Activated CD4-positive, alpha-beta memory T cell treated with anti-CD3 and anti-CD28 coated beads, Interleukin-2, amount 10 ng/mL, durations not matched to agents 7 days and 5 days (primary cell): ENCODE measurements at regions of chr10 and their contacts with region 1.

Region 1: GRCh38 chr10:119750391-119751230 is 24.8 kb downstream of the INPP5F start:
- DNase-seq: peak; percentile 69
- H3K4me3 Mint-ChIP-seq: no peak overlapping the region
- H3K27ac Mint-ChIP-seq: no peak overlapping the region
- H3K4me1 Mint-ChIP-seq: peaks cover 5% of the 10 kb centered on the region
- H3K27me3 Mint-ChIP-seq: no peaks in the 10 kb centered on the region

Region 2: DNA sequence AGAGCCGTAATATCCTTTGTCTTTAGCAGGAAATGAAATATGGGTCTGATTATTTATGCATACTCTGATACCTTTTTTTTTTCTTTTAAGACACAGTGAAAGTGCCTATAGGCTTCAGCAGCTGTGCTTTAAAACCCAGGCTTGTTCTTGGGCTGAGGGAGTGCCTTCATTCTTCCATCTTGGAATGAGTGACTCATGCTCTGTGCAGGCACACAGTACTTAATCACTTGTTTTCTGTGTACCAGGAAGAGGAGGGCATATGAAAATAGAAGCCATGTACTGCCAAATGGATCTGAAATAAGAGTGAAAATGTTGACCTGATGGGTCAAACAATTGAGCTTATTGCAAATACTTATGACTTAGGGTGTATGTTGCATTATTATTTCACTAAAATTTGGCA is 12.8 kb before region 1 on chr10:
- CTCF ChIA-PET with region 1: interaction called, 13 read pairs
- POLR2A ChIA-PET with region 1: no interaction called
- DNase-seq: no peak
- H3K4me3 Mint-ChIP-seq: no peak overlapping the region
- H3K27ac Mint-ChIP-seq: no peak overlapping the region
- H3K4me1 Mint-ChIP-seq: peaks cover 15% of the 10 kb centered on the region
- H3K27me3 Mint-ChIP-seq: no peaks in the 10 kb centered on the region

Region 3: DNA sequence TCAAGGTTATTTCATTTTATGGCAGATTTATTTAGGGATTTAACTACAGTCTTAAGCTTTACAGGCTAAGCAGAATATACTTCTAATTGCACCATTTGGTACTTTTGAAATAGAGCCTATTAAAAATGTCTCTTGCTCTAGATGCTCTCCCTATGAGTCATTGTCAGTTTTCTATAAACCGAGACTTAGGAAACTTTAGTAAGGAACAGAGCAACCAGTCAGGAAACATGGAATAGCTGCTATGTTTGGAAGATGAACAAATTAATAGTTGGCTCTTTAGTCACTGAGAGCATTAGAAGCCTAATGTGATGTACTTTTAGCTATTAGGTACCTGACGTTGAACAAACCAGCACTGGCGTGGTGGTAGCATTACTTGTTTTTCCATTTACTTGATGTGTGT is 10.5 kb after region 1 on chr10:
- CTCF ChIA-PET with region 1: interaction called, 12 read pairs
- POLR2A ChIA-PET with region 1: no interaction called
- DNase-seq: no peak
- H3K4me3 Mint-ChIP-seq: no peak overlapping the region
- H3K27ac Mint-ChIP-seq: no peak overlapping the region
- H3K4me1 Mint-ChIP-seq: peaks cover 3% of the 10 kb centered on the region
- H3K27me3 Mint-ChIP-seq: no peaks in the 10 kb centered on the region

Region 4: GRCh38 chr10:119859420-119860258 is 109.0 kb after region 1 on chr10:
- CTCF ChIA-PET with region 1: interaction called, 53 read pairs
- POLR2A ChIA-PET with region 1: interaction called, 3 read pairs
- DNase-seq: no peak
- H3K4me3 Mint-ChIP-seq: no peak overlapping the region
- H3K27ac Mint-ChIP-seq: no peak overlapping the region
- H3K4me1 Mint-ChIP-seq: peaks cover 45% of the 10 kb centered on the region
- H3K27me3 Mint-ChIP-seq: no peaks in the 10 kb centered on the region

Region 5: GRCh38 chr10:119903946-119904666 is 153.5 kb after region 1 on chr10:
- CTCF ChIA-PET with region 1: no interaction called
- POLR2A ChIA-PET with region 1: no interaction called
- DNase-seq: no peak
- H3K4me3 Mint-ChIP-seq: no peak overlapping the region
- H3K27ac Mint-ChIP-seq: no peak overlapping the region
- H3K4me1 Mint-ChIP-seq: peaks cover 6% of the 10 kb centered on the region
- H3K27me3 Mint-ChIP-seq: no peaks in the 10 kb centered on the region